Heart right ventricle (tissue), 16 donors: ENCODE measurements at regions of chr5 and their contacts with region 1.

Region 1: GRCh38 chr5:68252673-68253623 is 37.4 kb downstream of the PIK3R1 start:
- DNase-seq: peak in 1 of 2 donors; percentile 66
- ATAC-seq: peak; percentile 60 to 82 (median 70)
- H3K4me3 ChIP-seq: peak overlapping the region in 3 of 10 donors; percentile 1 to 12 (median 10)
- H3K27ac ChIP-seq: peak overlapping the region; percentile 11 to 86 (median 69)
- H3K4me1 ChIP-seq: peaks cover 28 to 100% (median 96%) of the 10 kb centered on the region in 9 donors
- H3K27me3 ChIP-seq: no peaks in the 10 kb centered on the region
- CTCF ChIP-seq: peak; percentile 47 to 86 (median 77)

Region 2: DNA sequence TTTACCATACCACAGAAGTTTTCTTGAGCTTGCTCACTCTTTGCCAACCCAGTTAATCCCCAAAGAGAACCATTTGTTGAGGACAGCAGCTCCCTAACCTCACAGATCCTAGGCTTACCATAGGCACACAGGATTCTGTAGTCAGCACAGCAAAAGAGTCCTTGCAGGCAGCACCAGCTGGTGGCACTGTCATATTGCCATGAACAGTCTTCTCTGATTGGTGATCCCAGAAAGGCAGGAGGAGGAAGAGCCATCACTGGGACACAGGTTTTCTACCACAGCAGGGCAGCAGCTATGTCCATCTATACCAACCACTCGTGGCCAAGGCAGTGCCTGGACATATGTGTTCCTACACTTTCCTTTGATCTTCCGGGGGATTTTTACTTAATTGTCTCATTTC is 759.3 kb before region 1 on chr5:
- intact Hi-C with region 1: loop called in 6 of 10 experiments (anchors 5 to 10 kb)
- DNase-seq: peak; percentile 13 to 44
- ATAC-seq: peak; percentile 55 to 95 (median 91)
- H3K4me3 ChIP-seq: no peak overlapping the region
- H3K27ac ChIP-seq: no peak overlapping the region
- H3K4me1 ChIP-seq: peaks cover 0 to 13% (median 0%) of the 10 kb centered on the region in 9 donors
- H3K27me3 ChIP-seq: no peaks in the 10 kb centered on the region
- CTCF ChIP-seq: peak in 7 of 9 donors; percentile 35 to 65 (median 58)

Region 3: DNA sequence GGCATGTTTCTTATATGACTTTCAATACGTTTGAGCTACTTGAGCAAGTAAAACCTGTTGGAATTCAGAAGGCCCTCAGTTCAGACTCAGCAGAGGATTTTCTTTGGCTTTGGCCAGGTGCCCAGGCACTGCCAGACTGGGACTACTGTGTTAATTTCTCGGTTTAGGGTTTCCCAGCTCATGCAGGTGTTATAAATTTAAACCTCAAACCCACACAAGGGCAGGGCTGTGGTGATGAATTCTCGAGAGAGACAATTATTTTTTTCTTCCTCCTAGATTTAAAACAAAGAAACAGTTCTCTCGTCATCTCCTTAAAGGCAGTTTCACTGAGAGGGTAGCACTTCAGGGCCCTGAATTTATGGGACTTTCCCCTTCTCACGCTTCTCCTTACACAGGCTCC is 443.4 kb before region 1 on chr5:
- intact Hi-C with region 1: loop called in 2 of 10 experiments (anchors 5 to 10 kb)
- DNase-seq: no peak
- ATAC-seq: no peak
- H3K4me3 ChIP-seq: no peak overlapping the region
- H3K27ac ChIP-seq: peak overlapping the region in 8 of 10 donors; percentile 13 to 88 (median 80)
- H3K4me1 ChIP-seq: peaks cover 2 to 41% (median 18%) of the 10 kb centered on the region in 9 donors
- H3K27me3 ChIP-seq: no peaks in the 10 kb centered on the region
- CTCF ChIP-seq: no peak